ENCODE measurements at regions of chr7 and their contacts with region 1.

Region 1: DNA sequence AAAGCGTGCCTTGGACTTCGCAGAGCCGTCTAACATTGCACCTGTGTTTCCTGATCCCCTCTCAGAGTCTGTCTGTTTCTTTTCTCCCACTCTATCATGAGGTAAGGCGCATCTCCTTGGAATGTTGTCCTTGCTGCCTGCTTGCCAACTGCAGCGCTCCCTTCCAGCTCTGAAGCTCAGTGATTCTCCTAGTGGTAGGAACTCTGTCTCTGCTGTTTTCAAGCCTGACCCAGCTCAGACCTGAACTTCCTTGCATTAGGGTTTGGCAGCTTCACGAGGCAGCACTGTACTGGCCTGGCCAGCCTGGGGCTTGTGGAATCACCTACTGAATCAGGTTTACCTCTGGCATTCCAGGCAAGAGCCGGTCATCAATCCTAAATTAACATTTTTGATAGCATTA is 123.9 kb downstream of the CREB5 start:
- DNase-seq: no peak
- ATAC-seq: no peak
- H3K4me3 ChIP-seq: no peak overlapping the region
- H3K27ac ChIP-seq: no peak overlapping the region
- H3K4me1 ChIP-seq: peaks cover 17% of the 10 kb centered on the region
- H3K27me3 ChIP-seq: no peaks in the 10 kb centered on the region
- CTCF ChIP-seq: no peak; a peak in 1 of 6 replicates
- EP300 ChIP-seq: no peak
- POLR2A ChIP-seq: no peak
- RAD21 ChIP-seq: no peak

Region 2: GRCh38 chr7:28378574-28379149 is 157.6 kb before region 1 on chr7:
- CTCF ChIA-PET with region 1: no interaction called
- POLR2A ChIA-PET with region 1: no interaction called
- RAD21 ChIA-PET with region 1: no interaction called
- SMC1A ChIA-PET with region 1: no interaction called
- in situ Hi-C with region 1: no loop called
- intact Hi-C with region 1: no loop called
- DNase-seq: no peak
- ATAC-seq: no peak
- H3K4me3 ChIP-seq: no peak overlapping the region
- H3K27ac ChIP-seq: no peak overlapping the region
- H3K4me1 ChIP-seq: no peaks in the 10 kb centered on the region; the same call in 1 of the 2 replicates
- H3K27me3 ChIP-seq: no peaks in the 10 kb centered on the region
- CTCF ChIP-seq: no peak
- EP300 ChIP-seq: no peak
- POLR2A ChIP-seq: no peak
- RAD21 ChIP-seq: no peak

Region 3: DNA sequence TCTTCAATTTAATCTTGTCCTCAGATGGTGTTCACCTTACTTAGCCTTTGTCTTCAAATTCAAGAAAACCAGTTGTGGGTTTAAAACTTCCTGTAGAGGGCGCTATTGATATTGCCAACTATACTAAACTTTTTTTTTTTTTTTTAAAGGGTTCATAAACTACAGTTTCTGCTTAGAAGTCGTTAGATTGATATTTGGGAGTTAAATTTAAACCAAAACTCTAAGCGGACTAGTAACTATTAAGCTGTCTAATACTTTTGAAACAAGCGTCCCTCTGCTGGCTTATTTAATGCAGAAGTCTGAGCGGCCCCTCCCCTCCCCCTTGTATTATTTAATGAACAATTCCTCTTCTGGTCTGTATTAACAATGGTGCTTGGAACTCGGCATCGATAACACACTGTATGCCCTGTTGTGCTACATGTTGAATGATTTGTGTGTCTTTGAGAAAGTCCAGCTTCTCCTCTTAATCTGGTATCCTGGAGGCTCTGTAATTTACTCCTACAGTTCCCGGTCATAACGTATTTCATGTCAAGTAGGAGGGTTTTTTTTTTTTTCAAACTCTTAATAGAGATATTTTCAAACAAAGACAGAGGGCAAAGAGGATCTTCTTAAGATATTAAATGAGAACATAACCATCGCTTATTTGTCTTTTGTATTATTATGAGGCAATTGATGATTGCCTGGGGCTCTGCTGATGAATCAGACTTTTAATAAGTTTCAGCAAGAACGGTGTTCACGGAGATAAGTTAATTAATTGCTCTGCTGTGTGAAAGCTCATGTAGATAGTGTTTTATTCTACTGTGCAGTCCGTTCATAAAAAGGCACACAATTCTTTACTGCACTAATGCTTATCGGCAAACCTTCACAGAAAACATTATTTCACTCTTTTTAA is 146.5 kb before region 1 on chr7:
- CTCF ChIA-PET with region 1: no interaction called
- POLR2A ChIA-PET with region 1: no interaction called
- RAD21 ChIA-PET with region 1: interaction called, 3 read pairs
- SMC1A ChIA-PET with region 1: interaction called, 5 read pairs
- in situ Hi-C with region 1: no loop called
- intact Hi-C with region 1: loop called (anchors 5 kb)
- DNase-seq: no peak
- ATAC-seq: peak; percentile 64
- H3K4me3 ChIP-seq: no peak overlapping the region
- H3K27ac ChIP-seq: no peak overlapping the region
- H3K4me1 ChIP-seq: no peaks in the 10 kb centered on the region
- H3K27me3 ChIP-seq: no peaks in the 10 kb centered on the region
- CTCF ChIP-seq: peak; percentile 56 to 71 (median 61)
- EP300 ChIP-seq: no peak
- POLR2A ChIP-seq: no peak
- RAD21 ChIP-seq: peak; percentile 86

Region 4: DNA sequence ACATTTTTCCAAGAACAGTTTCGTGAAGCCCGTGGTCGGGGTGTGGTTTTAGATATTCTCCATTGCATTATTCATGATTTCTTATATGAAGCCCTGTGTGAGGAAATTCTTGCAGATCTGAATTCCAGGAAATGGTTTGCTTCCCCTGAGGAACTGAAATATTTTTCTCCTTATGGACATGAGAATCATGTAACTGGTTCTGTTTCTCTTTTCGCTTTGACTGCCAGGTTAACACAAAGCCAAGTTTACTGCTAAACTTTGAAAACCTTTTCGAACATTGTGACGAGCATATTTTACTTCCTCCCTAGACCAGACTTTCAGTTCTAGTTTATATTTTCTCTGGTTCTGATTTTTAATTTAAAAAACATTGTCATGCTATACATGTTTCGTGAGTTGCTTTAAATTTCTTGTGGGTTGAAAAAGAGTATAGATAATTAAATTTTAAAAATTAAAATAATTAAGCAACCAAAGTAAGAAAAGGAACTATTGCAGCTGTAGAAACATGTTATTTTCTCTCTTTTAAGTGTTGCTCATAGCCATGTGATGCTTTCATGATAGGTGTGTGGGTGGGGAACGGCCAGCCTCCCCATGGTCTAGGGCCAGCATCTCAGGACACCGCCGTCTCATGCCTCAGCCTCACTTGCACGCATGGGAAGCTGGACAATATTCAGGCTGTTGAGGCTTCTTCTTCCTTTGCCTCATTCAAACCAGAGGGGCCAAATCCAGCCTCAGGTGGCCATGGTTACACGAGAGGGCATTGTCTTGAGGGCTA is 26.8 kb before region 1 on chr7:
- CTCF ChIA-PET with region 1: interaction called, 4 read pairs
- POLR2A ChIA-PET with region 1: interaction called, 4 read pairs
- RAD21 ChIA-PET with region 1: interaction called, 33 read pairs
- SMC1A ChIA-PET with region 1: interaction called, 23 read pairs
- in situ Hi-C with region 1: no loop called
- intact Hi-C with region 1: loop called (anchors 1 kb)
- DNase-seq: peak; percentile 45
- ATAC-seq: peak; percentile 95
- H3K4me3 ChIP-seq: peak overlapping the region; percentile 14; the same call in 1 of the 2 replicates
- H3K27ac ChIP-seq: peak overlapping the region; percentile 70
- H3K4me1 ChIP-seq: peaks cover 17% of the 10 kb centered on the region
- H3K27me3 ChIP-seq: no peaks in the 10 kb centered on the region
- CTCF ChIP-seq: no peak
- EP300 ChIP-seq: peak; percentile 65 to 74
- POLR2A ChIP-seq: peak; percentile 43; the same call in 1 of the 2 replicates
- RAD21 ChIP-seq: peak; percentile 24; the same call in 1 of the 2 replicates

Region 5: GRCh38 chr7:28551331-28551730 is 15.1 kb after region 1 on chr7:
- CTCF ChIA-PET with region 1: interaction called, 4 read pairs
- POLR2A ChIA-PET with region 1: interaction called, 4 read pairs
- RAD21 ChIA-PET with region 1: no interaction called
- SMC1A ChIA-PET with region 1: interaction called, 34 read pairs
- in situ Hi-C with region 1: no loop called
- intact Hi-C with region 1: no loop called
- DNase-seq: no peak
- ATAC-seq: no peak
- H3K4me3 ChIP-seq: no peak overlapping the region
- H3K27ac ChIP-seq: no peak overlapping the region
- H3K4me1 ChIP-seq: no peaks in the 10 kb centered on the region
- H3K27me3 ChIP-seq: no peaks in the 10 kb centered on the region
- CTCF ChIP-seq: no peak
- EP300 ChIP-seq: no peak
- POLR2A ChIP-seq: no peak
- RAD21 ChIP-seq: no peak

Region 6: GRCh38 chr7:28626624-28627262 is 90.5 kb after region 1 on chr7:
- CTCF ChIA-PET with region 1: interaction called, 6 read pairs
- POLR2A ChIA-PET with region 1: no interaction called
- RAD21 ChIA-PET with region 1: interaction called, 13 read pairs
- SMC1A ChIA-PET with region 1: interaction called, 8 read pairs
- in situ Hi-C with region 1: no loop called
- intact Hi-C with region 1: loop called (anchors 1 kb)
- DNase-seq: no peak
- ATAC-seq: peak; percentile 57
- H3K4me3 ChIP-seq: no peak overlapping the region
- H3K27ac ChIP-seq: no peak overlapping the region
- H3K4me1 ChIP-seq: peaks cover 3% of the 10 kb centered on the region; the same call in 1 of the 2 replicates
- H3K27me3 ChIP-seq: no peaks in the 10 kb centered on the region
- CTCF ChIP-seq: peak; percentile 50 to 70 (median 67)
- EP300 ChIP-seq: no peak
- POLR2A ChIP-seq: no peak
- RAD21 ChIP-seq: peak; percentile 74

Region 7: GRCh38 chr7:29017713-29018112 is 481.5 kb after region 1 on chr7:
- CTCF ChIA-PET with region 1: no interaction called
- POLR2A ChIA-PET with region 1: no interaction called
- RAD21 ChIA-PET with region 1: no interaction called
- SMC1A ChIA-PET with region 1: no interaction called
- in situ Hi-C with region 1: no loop called
- intact Hi-C with region 1: no loop called
- DNase-seq: no peak
- ATAC-seq: no peak
- H3K4me3 ChIP-seq: no peak overlapping the region
- H3K27ac ChIP-seq: no peak overlapping the region
- H3K4me1 ChIP-seq: no peaks in the 10 kb centered on the region
- H3K27me3 ChIP-seq: no peaks in the 10 kb centered on the region
- CTCF ChIP-seq: no peak
- EP300 ChIP-seq: no peak
- POLR2A ChIP-seq: no peak
- RAD21 ChIP-seq: no peak

Region 8: DNA sequence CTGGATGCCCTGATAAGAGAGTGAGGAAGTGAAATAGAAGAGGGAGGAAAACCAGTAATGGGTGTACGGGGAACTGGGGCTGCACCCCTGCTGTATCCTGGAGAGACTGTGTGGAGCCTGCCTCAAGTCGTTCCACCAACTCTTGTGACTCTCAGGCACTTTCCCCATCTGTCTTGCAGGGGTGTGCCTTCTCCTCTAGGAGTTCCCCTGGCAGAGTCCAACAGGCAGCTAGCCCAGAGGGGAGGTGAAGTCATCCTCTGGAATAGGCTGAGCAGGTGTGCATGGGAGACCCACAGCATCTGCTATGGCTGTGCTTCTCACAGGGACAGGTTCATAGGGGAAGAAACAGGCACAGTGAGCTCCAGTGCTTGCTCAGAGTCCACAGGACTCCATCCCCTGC is 1316.8 kb after region 1 on chr7:
- CTCF ChIA-PET with region 1: no interaction called
- POLR2A ChIA-PET with region 1: no interaction called
- RAD21 ChIA-PET with region 1: no interaction called
- SMC1A ChIA-PET with region 1: no interaction called
- in situ Hi-C with region 1: no loop called
- intact Hi-C with region 1: no loop called
- DNase-seq: no peak
- ATAC-seq: no peak
- H3K4me3 ChIP-seq: no peak overlapping the region
- H3K27ac ChIP-seq: no peak overlapping the region
- H3K4me1 ChIP-seq: no peaks in the 10 kb centered on the region
- H3K27me3 ChIP-seq: no peaks in the 10 kb centered on the region; a peak in 2 of 4 replicates
- CTCF ChIP-seq: no peak
- EP300 ChIP-seq: no peak
- POLR2A ChIP-seq: no peak
- RAD21 ChIP-seq: no peak

Measured in GM12878 (cell line).